ENCODE measurements at regions of chr10 and their contacts with region 1.

Region 1: DNA sequence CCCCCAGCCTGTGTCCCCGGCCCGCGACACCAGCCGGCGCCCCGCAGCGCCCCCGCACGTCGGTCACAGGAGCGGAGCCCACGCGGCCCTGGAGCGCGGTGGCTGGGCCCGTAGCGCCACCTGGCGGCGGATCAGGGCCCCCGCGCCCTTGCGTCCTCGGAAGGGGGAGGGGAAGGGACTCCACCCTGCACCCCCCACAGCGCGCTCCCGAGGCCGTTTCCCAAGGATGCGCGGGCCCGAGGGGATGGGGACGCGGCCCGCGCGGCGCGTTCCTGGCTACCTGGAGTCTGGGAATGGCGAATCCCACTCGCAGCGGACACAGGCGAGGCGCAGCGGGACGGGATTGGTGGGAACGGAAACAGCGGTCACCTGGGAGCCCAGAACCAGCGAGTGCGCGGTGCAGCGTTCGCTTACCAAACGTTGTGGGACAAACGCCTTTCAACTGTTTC is 23.8 kb upstream of the MKI67 start:
- DNase-seq: peak; percentile 95
- H3K4me3 Mint-ChIP-seq: peak overlapping the region; percentile 78
- H3K27ac Mint-ChIP-seq: no peak overlapping the region
- H3K4me1 Mint-ChIP-seq: peaks cover 16% of the 10 kb centered on the region
- H3K27me3 Mint-ChIP-seq: peaks cover 22% of the 10 kb centered on the region

Region 2: GRCh38 chr10:127906548-127907377 is 243.3 kb before region 1 on chr10 and contains the start of gene PTPRE:
- intact Hi-C with region 1: loop called (anchors 2 kb)
- DNase-seq: peak; percentile 91
- H3K4me3 Mint-ChIP-seq: peak within 1 kb of the TSS; percentile 46
- H3K27ac Mint-ChIP-seq: no peak within 1 kb of the TSS
- H3K4me1 Mint-ChIP-seq: no peaks in the 10 kb centered on the region
- H3K27me3 Mint-ChIP-seq: peaks cover 48% of the 10 kb centered on the region
- total RNA-seq, gene PTPRE: 33.6 and 35.8 TPM in 2 replicates

Region 3: GRCh38 chr10:127935071-127935561 is 215.0 kb before region 1 on chr10:
- intact Hi-C with region 1: no loop called
- DNase-seq: no peak
- H3K4me3 Mint-ChIP-seq: no peak overlapping the region
- H3K27ac Mint-ChIP-seq: no peak overlapping the region
- H3K4me1 Mint-ChIP-seq: no peaks in the 10 kb centered on the region
- H3K27me3 Mint-ChIP-seq: peaks cover 7% of the 10 kb centered on the region

Region 4: DNA sequence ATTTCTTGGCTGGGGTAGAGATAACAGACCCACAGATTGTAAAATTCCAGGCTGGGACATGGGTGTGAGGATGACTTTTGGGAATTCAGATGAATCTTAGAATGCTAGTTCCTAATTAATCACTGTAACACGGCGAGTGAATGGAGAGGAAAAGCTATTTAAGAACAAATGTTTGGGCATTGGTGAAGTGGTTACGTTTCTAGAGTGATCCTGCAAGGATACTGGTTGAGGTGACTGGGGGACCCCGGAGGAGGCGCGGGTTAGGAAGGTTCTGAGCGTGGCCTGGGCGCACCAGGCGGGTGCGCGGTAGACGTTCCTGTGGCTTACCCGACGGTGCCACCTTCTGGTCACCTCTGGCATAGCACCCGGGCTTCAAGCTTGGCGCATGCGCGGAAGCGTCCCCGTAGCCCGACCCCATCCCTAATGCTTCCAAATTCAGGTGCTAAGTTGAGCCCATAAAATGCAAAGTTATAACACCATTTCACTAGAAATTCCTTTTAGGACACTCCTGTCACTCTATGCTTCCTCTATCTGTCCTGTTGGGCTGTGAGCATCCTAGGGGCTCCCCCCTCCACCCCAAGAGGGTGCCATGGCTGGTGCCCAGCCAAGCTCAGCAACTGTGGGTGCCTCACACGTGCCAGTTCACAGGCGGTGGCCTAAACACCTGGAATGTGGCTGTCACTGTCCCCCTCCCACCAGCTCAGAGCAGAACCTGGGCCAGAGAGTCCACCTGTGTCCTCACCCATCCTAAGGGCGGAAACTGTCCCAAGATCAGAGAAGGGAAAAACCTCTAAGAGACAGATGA is 138.7 kb before region 1 on chr10:
- intact Hi-C with region 1: loop called (anchors 1 kb)
- DNase-seq: peak; percentile 97
- H3K4me3 Mint-ChIP-seq: peak overlapping the region; percentile 49
- H3K27ac Mint-ChIP-seq: no peak overlapping the region
- H3K4me1 Mint-ChIP-seq: peaks cover 10% of the 10 kb centered on the region
- H3K27me3 Mint-ChIP-seq: peaks cover 10% of the 10 kb centered on the region

Region 5: GRCh38 chr10:128035557-128035973 is 114.5 kb before region 1 on chr10:
- intact Hi-C with region 1: loop called (anchors 2 kb)
- DNase-seq: peak; percentile 90
- H3K4me3 Mint-ChIP-seq: no peak overlapping the region
- H3K27ac Mint-ChIP-seq: no peak overlapping the region
- H3K4me1 Mint-ChIP-seq: peaks cover 13% of the 10 kb centered on the region
- H3K27me3 Mint-ChIP-seq: peaks cover 2% of the 10 kb centered on the region

Region 6: GRCh38 chr10:128064108-128064969 is 85.7 kb before region 1 on chr10:
- intact Hi-C with region 1: loop called (anchors 1 kb)
- DNase-seq: peak; percentile 85
- H3K4me3 Mint-ChIP-seq: peak overlapping the region; percentile 77
- H3K27ac Mint-ChIP-seq: peak overlapping the region; percentile 96
- H3K4me1 Mint-ChIP-seq: peaks cover 57% of the 10 kb centered on the region
- H3K27me3 Mint-ChIP-seq: no peaks in the 10 kb centered on the region

Region 7: DNA sequence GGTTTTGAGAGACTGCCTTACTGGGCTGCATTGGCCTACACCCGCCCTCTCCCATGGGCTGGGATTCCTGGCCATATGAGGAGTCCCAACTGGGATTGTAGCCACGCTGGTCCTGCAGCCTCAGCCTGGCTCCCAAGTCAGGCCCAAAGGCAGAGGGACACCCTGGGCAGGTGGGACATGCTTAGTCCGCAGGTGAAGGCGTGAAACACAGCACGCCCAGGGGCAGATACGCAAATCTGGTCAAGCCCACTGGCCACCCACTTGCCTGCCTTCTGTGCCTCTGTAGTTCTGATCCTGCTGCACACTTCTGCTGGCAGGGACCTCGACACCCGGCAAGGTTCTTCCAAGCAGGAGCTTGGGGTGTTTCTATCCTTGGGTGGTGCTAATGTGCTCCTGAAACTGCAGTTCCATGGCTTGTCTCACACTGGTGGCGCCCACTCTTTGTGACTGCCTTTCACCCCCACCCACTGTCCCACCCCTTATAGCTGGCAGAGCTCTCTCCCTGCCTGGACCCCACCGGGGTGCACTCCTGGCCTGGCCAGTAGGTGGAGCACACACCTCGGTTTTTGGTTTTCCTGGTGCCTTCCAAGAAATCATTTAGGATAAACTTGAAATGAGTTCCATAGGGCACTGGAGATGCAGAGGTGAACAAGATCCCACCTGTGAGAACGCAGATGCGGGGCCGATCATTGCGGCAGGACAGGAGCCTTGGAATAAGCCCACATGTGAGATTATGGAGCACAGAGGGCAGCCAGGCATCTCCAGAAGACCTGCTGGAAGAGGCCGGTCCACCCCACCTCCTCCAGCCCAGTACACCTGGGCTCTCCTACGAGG is 71.7 kb before region 1 on chr10:
- intact Hi-C with region 1: loop called (anchors 1 kb)
- DNase-seq: peak; percentile 86
- H3K4me3 Mint-ChIP-seq: no peak overlapping the region
- H3K27ac Mint-ChIP-seq: no peak overlapping the region
- H3K4me1 Mint-ChIP-seq: peaks cover 7% of the 10 kb centered on the region
- H3K27me3 Mint-ChIP-seq: no peaks in the 10 kb centered on the region

Region 8: GRCh38 chr10:128125944-128126764 is 23.9 kb before region 1 on chr10 and contains the start of gene MKI67:
- intact Hi-C with region 1: loop called (anchors 1 kb)
- DNase-seq: peak; percentile 97
- H3K4me3 Mint-ChIP-seq: peak within 1 kb of the TSS; percentile 95
- H3K27ac Mint-ChIP-seq: peak within 1 kb of the TSS; percentile 96
- H3K4me1 Mint-ChIP-seq: peaks cover 38% of the 10 kb centered on the region
- H3K27me3 Mint-ChIP-seq: peaks cover 4% of the 10 kb centered on the region
- total RNA-seq, gene MKI67: 161 and 164 TPM in 2 replicates

Region 9: GRCh38 chr10:128286762-128287500 is 136.9 kb after region 1 on chr10:
- intact Hi-C with region 1: no loop called
- DNase-seq: no peak
- H3K4me3 Mint-ChIP-seq: no peak overlapping the region
- H3K27ac Mint-ChIP-seq: no peak overlapping the region
- H3K4me1 Mint-ChIP-seq: no peaks in the 10 kb centered on the region
- H3K27me3 Mint-ChIP-seq: peaks cover 45% of the 10 kb centered on the region

Region 10: GRCh38 chr10:128576943-128577670 is 427.0 kb after region 1 on chr10:
- intact Hi-C with region 1: no loop called
- DNase-seq: no peak
- H3K4me3 Mint-ChIP-seq: no peak overlapping the region
- H3K27ac Mint-ChIP-seq: no peak overlapping the region
- H3K4me1 Mint-ChIP-seq: no peaks in the 10 kb centered on the region
- H3K27me3 Mint-ChIP-seq: no peaks in the 10 kb centered on the region

Measured in activated CD4-positive, alpha-beta T cell treated with anti-CD3 and anti-CD28 coated beads, Interleukin-2, amount 10 ng/mL, durations not matched to agents 24 days and 14 days (primary cell).